Transverse colon (tissue), 4 donors: ENCODE measurements at regions of chr22 and their contacts with region 1.

Region 1: GRCh38 chr22:20069331-20070042 is 10.6 kb upstream of the DGCR8 start:
- DNase-seq: no peak
- H3K4me3 ChIP-seq: no peak overlapping the region
- H3K27ac ChIP-seq: no peak overlapping the region
- H3K4me1 ChIP-seq: no peaks in the 10 kb centered on the region
- H3K27me3 ChIP-seq: no peaks in the 10 kb centered on the region
- CTCF ChIP-seq: no peak
- EP300 ChIP-seq: no peak
- POLR2A ChIP-seq: no peak

Region 2: DNA sequence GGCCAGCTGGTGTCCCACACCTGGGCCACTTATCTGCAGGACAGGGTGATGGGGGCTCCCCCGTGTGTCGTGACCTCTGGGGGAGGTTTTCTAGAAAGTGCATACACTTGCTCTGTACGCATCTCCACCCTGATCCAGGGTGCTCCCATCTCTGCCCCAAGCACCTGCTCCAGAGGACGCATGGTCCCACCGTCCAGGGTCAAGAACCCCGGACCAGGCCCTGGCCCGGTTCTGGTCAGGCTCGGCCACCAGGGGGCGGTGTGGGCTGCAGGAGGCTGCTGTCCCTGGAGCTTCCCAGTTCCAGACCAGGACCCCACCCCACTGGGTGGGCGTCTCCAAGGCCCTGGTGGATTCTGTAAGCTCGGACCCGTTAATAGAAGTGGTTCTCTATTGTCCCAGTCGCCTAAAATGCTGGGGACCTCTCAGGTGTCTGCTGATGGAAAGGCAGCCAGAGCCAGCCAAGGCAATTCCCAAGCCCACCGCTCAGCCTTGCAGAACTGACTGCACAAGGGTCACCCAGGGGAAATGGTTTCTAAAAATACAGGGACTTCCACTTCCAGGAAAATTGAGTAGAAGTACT is 389.9 kb before region 1 on chr22:
- in situ Hi-C with region 1: no loop called
- intact Hi-C with region 1: no loop called
- DNase-seq: peak; percentile 27
- H3K4me3 ChIP-seq: no peak overlapping the region
- H3K27ac ChIP-seq: no peak overlapping the region
- H3K4me1 ChIP-seq: no peaks in the 10 kb centered on the region
- H3K27me3 ChIP-seq: peaks cover 42% of the 10 kb centered on the region
- CTCF ChIP-seq: peak; percentile 63 to 83 (median 80)
- EP300 ChIP-seq: no peak
- POLR2A ChIP-seq: no peak

Region 3: GRCh38 chr22:20031732-20032406 is 37.6 kb before region 1 on chr22:
- in situ Hi-C with region 1: no loop called
- intact Hi-C with region 1: loop called (anchors 5 kb)
- DNase-seq: peak; percentile 61
- H3K4me3 ChIP-seq: no peak overlapping the region
- H3K27ac ChIP-seq: no peak overlapping the region
- H3K4me1 ChIP-seq: peaks cover 0 to 16% (median 1%) of the 10 kb centered on the region in 4 donors
- H3K27me3 ChIP-seq: no peaks in the 10 kb centered on the region
- CTCF ChIP-seq: no peak
- EP300 ChIP-seq: no peak
- POLR2A ChIP-seq: no peak